ENCODE measurements at regions of chr1 and their contacts with region 1.

Region 1: DNA sequence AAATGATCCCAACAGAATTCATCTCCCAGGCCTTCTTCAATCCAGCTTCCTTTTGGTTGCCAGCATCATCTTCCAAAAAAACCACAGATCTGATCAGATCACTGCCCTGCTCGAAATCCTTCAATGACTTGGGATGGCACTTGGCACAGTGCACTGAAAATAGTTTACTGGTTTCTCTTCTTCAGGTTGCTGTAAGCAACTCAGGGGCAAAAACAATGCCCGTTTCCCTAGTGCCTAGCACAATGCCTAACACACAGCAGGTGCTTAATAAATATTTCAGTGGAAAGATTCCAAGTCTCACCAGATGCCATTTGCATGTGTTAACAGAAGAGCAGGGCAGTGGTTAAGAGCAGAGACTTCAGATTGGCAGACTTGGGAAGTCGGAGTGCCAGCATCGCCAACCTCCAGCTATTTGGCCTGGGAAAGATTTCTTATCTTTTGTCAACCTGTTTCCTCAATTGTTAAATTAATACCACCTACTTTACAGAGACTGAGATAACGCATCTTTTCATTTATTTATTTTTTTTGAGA is 10.9 kb upstream of the METTL25B start:
- H3K4me3 ChIP-seq: no peak overlapping the region
- H3K27ac ChIP-seq: no peak overlapping the region
- H3K4me1 ChIP-seq: no peaks in the 10 kb centered on the region
- CTCF ChIP-seq: no peak

Region 2: GRCh38 chr1:156705918-156706656 is 11.3 kb before region 1 on chr1:
- CTCF ChIA-PET with region 1: interaction called, 34 read pairs
- POLR2A ChIA-PET with region 1: interaction called, 3 read pairs
- H3K4me3 ChIP-seq: peak overlapping the region; percentile 36
- H3K27ac ChIP-seq: peak overlapping the region; percentile 39; the same call in 1 of the 2 replicates
- H3K4me1 ChIP-seq: peaks cover 12% of the 10 kb centered on the region
- CTCF ChIP-seq: peak; percentile 92

Measured in HEK293 (cell line).